CD8-positive, alpha-beta T cell (primary cell): ENCODE measurements at regions of chr2 and their contacts with region 1.

Region 1: DNA sequence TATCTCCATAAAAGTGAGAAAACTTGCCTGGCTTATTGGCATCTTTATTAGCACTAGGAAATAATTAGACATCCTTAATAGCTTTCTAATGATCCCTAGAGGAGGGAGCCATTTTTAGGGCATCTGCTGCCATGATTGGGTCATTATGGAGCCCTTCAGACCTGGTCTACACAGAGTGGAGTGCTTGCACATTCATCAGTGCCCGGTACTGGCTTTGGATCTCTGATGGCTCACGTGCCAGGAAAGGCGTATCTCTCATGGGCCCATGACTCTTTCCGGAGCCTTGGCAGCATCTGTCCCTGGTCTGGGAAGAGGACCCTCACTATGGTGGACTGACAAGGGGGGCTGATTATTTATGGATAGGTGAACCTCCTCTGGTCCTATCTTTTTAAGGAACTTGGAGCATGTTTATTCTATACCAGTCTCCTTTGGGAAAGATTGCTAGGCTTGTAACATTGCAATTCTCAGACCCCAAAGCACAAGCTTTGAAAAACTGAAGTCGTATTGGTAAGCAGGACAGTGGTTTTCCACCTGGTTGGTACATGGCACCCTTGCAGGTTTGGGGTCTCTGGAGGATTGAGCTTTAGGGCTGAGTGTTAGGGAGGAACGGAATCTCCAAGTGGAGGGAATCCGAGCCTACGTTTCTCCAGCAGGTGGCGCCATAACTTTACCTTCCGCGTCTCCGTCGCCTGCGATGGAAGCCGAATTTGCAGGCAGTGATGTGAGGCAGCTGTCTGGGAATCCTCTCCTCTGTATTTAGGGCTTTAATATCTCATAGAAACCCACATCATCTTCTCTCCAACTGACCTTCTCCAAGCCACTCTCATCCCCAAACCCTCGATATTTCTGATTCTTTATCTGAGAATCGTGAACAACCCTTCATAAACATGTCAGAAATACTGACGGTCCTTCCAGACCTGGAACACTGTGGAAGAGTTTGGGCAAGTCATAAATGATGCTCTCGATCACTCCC is 27.8 kb downstream of the SIX2 start:
- DNase-seq: peak; percentile 37 to 77 (median 68)
- ATAC-seq: no peak
- H3K4me3 ChIP-seq: no peak overlapping the region
- H3K4me3 Mint-ChIP-seq: no peak overlapping the region
- H3K27ac ChIP-seq: no peak overlapping the region
- H3K27ac Mint-ChIP-seq: no peak overlapping the region
- H3K4me1 ChIP-seq: no peaks in the 10 kb centered on the region
- H3K4me1 Mint-ChIP-seq: peaks cover 2% of the 10 kb centered on the region
- H3K27me3 ChIP-seq: no peaks in the 10 kb centered on the region
- H3K27me3 Mint-ChIP-seq: peaks cover 25% of the 10 kb centered on the region
- CTCF ChIP-seq: peak; percentile 64

Region 2: DNA sequence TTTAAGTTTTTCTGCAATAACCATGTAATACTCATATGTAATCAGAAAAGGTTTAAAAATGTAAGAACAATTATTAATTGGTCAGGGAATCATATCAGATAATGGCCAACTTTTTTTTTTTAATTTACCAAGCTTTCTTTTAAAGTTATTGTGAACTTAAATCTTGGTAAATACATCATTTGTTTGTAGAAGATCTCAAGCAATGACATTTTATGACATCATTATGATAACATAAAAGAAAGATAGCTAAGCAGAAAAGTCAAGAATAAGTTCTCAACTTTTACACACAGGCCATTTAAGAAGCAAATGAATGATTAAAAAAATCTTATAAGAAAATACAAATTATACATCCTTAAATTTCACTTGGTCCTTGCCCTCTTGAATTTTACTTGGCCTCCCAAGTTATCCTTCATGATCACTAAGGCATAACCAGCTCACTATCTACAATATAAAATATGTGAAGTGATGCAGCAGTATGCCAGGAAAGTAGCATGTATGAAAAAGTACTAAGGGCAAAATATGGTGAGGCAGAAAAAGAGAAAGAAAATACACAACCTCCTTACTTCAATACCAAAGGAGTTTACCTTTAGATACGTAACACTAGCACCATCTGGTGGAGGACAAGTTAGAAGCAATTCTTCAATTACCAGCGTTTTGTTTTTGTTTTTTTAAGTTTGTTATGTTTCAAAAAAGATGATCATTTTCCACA is 513.0 kb after region 1 on chr2:
- CTCF ChIA-PET with region 1: interaction called, 79 read pairs
- POLR2A ChIA-PET with region 1: interaction called, 4 read pairs
- intact Hi-C with region 1: loop called in 1 of 2 experiments (anchors 1 kb)
- DNase-seq: peak in 2 of 9 experiments; percentile 55 to 67
- ATAC-seq: no peak
- H3K4me3 ChIP-seq: no peak overlapping the region
- H3K4me3 Mint-ChIP-seq: no peak overlapping the region
- H3K27ac ChIP-seq: no peak overlapping the region
- H3K27ac Mint-ChIP-seq: no peak overlapping the region
- H3K4me1 ChIP-seq: no peaks in the 10 kb centered on the region
- H3K4me1 Mint-ChIP-seq: peaks cover 8% of the 10 kb centered on the region
- H3K27me3 ChIP-seq: no peaks in the 10 kb centered on the region
- H3K27me3 Mint-ChIP-seq: no peaks in the 10 kb centered on the region
- CTCF ChIP-seq: peak; percentile 83

Region 3: GRCh38 chr2:45578056-45578809 is 596.8 kb after region 1 on chr2:
- CTCF ChIA-PET with region 1: interaction called, 30 read pairs
- POLR2A ChIA-PET with region 1: no interaction called
- intact Hi-C with region 1: loop called in 1 of 2 experiments (anchors 1 kb)
- DNase-seq: peak in 4 of 9 experiments; percentile 11 to 69 (median 47)
- ATAC-seq: peak; percentile 73
- H3K4me3 ChIP-seq: no peak overlapping the region
- H3K4me3 Mint-ChIP-seq: no peak overlapping the region
- H3K27ac ChIP-seq: no peak overlapping the region
- H3K27ac Mint-ChIP-seq: peak overlapping the region; percentile 16
- H3K4me1 ChIP-seq: no peaks in the 10 kb centered on the region
- H3K4me1 Mint-ChIP-seq: peaks cover 1% of the 10 kb centered on the region
- H3K27me3 ChIP-seq: no peaks in the 10 kb centered on the region
- H3K27me3 Mint-ChIP-seq: no peaks in the 10 kb centered on the region
- CTCF ChIP-seq: peak; percentile 54

Region 4: DNA sequence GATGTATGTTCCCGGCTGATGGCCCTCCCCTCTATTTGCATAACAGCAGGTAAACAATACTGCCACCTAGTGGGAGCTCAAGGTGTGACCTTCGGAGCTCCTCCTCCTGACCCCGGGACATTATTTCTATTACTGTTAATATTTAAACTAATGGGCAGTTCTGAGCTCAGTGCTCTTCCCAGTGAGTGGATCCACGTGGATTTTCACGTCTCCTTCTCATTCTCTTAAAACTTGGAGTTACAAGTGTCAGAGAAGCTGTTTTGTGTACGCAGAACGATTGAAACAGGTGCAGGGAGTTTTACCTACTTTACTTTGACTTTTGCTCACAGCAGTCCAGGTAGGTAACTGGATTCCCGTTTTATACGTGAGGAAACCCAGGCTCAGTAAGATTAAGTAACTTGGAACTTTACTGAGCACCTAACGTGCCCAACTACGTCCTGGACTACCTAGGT is 797.3 kb after region 1 on chr2:
- CTCF ChIA-PET with region 1: no interaction called
- POLR2A ChIA-PET with region 1: no interaction called
- intact Hi-C with region 1: loop called in 1 of 2 experiments (anchors 5 kb)
- DNase-seq: peak; percentile 37 to 85 (median 72)
- ATAC-seq: peak; percentile 90
- H3K4me3 ChIP-seq: peak overlapping the region in 1 of 2 experiments; percentile 29
- H3K4me3 Mint-ChIP-seq: peak overlapping the region; percentile 54
- H3K27ac ChIP-seq: no peak overlapping the region
- H3K27ac Mint-ChIP-seq: no peak overlapping the region
- H3K4me1 ChIP-seq: peaks cover 5% of the 10 kb centered on the region
- H3K4me1 Mint-ChIP-seq: peaks cover 5% of the 10 kb centered on the region
- H3K27me3 ChIP-seq: no peaks in the 10 kb centered on the region
- H3K27me3 Mint-ChIP-seq: no peaks in the 10 kb centered on the region
- CTCF ChIP-seq: peak; percentile 93